PC-3 (cell line): ENCODE measurements at regions of chr5 and their contacts with region 1.

Region 1: GRCh38 chr5:170623576-170624181 is 119.9 kb downstream of the KCNIP1 start:
- DNase-seq: peak; percentile 64
- ATAC-seq: peak; percentile 80
- H3K4me3 ChIP-seq: no peak overlapping the region
- H3K27ac ChIP-seq: no peak overlapping the region
- H3K4me1 ChIP-seq: no peaks in the 10 kb centered on the region
- H3K27me3 ChIP-seq: no peaks in the 10 kb centered on the region
- CTCF ChIP-seq: peak; percentile 73

Region 2: DNA sequence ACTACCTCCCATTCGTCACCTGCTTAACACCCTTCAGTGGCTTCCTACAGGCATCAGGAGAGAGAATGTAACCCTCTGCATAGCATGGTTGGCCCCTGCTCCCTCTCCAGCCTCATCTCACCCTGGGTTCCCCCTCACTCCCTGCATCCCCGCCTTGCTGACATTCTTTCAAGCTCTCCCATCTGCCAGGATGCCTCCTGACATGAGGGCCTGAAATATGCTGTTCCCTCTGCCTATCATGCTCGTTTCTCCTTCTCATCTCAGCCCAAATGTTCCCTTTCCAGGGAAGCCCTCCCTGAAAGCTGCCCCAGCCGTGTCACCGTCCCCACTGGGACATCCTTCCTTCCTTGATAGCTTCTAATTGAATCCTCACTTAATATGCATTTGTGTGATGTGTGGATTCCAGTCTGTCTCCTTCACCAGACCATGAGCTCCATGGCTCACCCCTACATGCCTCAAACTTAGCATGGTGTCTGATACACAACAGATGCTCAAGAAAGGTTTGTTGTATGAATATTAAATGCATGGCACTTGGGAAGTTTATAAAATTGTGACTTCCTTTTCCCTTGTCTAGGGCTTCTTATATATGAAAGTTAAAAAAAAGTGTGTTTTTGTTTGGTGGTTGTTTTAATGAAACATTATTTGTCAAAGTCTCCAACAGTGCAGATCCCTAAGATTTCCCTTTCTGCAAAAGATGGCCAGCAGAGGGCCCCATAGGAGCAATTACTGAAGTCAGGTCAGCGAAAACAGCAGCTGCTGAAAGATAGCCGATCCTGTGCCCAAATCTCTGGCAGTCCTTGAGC is 398.2 kb before region 1 on chr5:
- CTCF ChIA-PET with region 1: no interaction called
- POLR2A ChIA-PET with region 1: no interaction called
- intact Hi-C with region 1: loop called (anchors 5 kb)
- DNase-seq: peak; percentile 76
- ATAC-seq: peak; percentile 90
- H3K4me3 ChIP-seq: no peak overlapping the region
- H3K27ac ChIP-seq: no peak overlapping the region
- H3K4me1 ChIP-seq: peaks cover 11% of the 10 kb centered on the region
- H3K27me3 ChIP-seq: no peaks in the 10 kb centered on the region
- CTCF ChIP-seq: peak; percentile 78

Region 3: GRCh38 chr5:170302653-170303501 is 320.8 kb before region 1 on chr5:
- CTCF ChIA-PET with region 1: no interaction called
- POLR2A ChIA-PET with region 1: no interaction called
- intact Hi-C with region 1: no loop called
- DNase-seq: no peak
- ATAC-seq: no peak
- H3K4me3 ChIP-seq: no peak overlapping the region
- H3K27ac ChIP-seq: no peak overlapping the region
- H3K4me1 ChIP-seq: no peaks in the 10 kb centered on the region
- H3K27me3 ChIP-seq: peaks cover 17% of the 10 kb centered on the region
- CTCF ChIP-seq: no peak

Region 4: GRCh38 chr5:170434966-170435605 is 188.6 kb before region 1 on chr5:
- CTCF ChIA-PET with region 1: no interaction called
- POLR2A ChIA-PET with region 1: no interaction called
- intact Hi-C with region 1: loop called (anchors 1 kb)
- DNase-seq: peak; percentile 55
- ATAC-seq: peak; percentile 81
- H3K4me3 ChIP-seq: no peak overlapping the region
- H3K27ac ChIP-seq: no peak overlapping the region
- H3K4me1 ChIP-seq: no peaks in the 10 kb centered on the region
- H3K27me3 ChIP-seq: peaks cover 5% of the 10 kb centered on the region
- CTCF ChIP-seq: peak; percentile 79

Region 5: DNA sequence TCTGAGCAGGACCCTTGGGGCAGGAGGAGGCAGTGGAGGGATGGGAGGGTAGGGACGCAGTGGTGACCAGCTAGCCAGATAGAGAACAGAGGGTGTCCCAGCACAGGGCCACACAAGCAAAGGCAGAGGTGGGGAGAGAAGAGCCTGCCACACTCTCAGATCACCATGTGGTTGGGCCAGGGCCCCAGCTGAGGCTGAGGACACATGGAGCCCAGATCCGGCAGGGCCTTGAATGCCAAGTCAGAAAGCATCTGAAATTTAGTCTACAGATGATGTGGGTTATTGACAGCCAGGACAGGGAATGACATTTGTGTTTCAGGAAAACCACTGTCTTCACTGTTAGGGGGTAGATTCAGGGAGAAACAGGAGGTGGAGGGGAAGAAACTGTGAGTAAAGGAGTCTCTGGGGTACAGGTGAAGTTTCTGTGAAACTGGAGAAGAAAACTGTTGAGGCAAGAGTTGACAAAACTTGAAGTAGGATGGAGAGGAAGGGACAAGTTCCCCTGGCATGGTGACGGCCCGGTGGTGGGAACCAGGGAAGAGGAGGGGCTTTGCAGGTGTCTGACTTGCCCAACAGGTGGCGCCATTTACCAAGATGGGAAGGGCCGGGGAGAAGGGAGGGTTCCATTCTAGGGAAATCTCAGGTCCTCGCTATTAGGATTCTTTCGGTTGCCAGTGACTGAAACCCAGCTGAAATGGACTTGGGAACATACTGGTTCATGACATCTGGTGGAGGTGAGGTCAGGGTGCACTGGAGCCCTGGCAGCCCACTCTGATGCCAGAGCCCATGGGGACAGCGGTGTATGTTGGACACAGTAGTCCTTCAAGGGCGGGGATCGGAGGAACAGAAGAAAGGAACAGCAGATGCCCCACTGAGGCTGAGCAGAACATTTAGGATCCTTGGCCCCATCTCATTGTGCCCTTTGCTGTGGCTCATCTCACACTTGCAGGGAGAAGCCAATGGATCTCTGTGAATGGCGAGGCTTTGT is 19.8 kb before region 1 on chr5:
- CTCF ChIA-PET with region 1: no interaction called
- POLR2A ChIA-PET with region 1: no interaction called
- intact Hi-C with region 1: loop called (anchors 1 kb)
- DNase-seq: peak; percentile 58
- ATAC-seq: peak; percentile 67
- H3K4me3 ChIP-seq: no peak overlapping the region
- H3K27ac ChIP-seq: no peak overlapping the region
- H3K4me1 ChIP-seq: no peaks in the 10 kb centered on the region
- H3K27me3 ChIP-seq: no peaks in the 10 kb centered on the region; the same call in 1 of the 2 replicates
- CTCF ChIP-seq: peak; percentile 68